K562 (cell line): ENCODE measurements at regions of chr4 and their contacts with region 1.

Region 1: DNA sequence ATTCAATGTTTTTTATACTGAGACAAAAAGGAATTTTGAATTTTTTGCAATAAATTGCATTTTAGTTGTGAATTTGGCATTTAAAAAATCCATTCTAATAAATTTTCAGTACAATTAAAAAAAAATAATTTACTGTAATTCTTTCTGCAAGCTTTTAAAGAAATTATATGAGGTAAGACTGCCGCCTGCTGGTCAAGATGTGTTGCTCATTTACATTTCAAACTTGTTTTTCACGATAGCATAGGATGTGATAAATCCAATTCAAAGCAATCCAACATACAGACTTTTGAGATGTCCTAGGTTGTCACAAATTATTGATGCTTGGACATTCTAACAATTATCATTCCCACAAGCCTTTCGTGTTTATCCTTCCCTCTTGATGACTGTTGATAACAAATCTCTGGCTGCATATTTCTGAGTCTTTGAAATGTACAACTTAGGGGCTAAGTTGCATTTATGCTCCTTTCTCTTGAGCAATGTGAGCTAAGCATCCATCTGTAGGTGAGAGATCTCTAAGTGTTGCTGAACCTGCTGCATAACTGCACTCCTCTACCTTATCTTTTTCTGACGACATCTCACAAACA is 21.7 kb upstream of the MFAP3L start:
- DNase-seq: peak; percentile 23 to 73 (median 26)
- ATAC-seq: peak; percentile 47; the same call in 1 of the 3 replicates
- H3K4me3 ChIP-seq: no peak overlapping the region
- H3K27ac ChIP-seq: no peak overlapping the region
- H3K4me1 ChIP-seq: no peaks in the 10 kb centered on the region
- H3K27me3 ChIP-seq: no peaks in the 10 kb centered on the region
- CTCF ChIP-seq: peak; percentile 49 to 87 (median 67); a peak in 5 of 6 replicates
- EP300 ChIP-seq: no peak
- POLR2A ChIP-seq: no peak
- RAD21 ChIP-seq: peak; percentile 82 to 90

Region 2: GRCh38 chr4:169810325-169811323 is 237.2 kb before region 1 on chr4:
- CTCF ChIA-PET with region 1: interaction called, 12 read pairs
- POLR2A ChIA-PET with region 1: no interaction called
- in situ Hi-C with region 1: loop called (anchors 5 kb)
- intact Hi-C with region 1: loop called (anchors 1 kb)
- DNase-seq: peak; percentile 63 to 73 (median 68)
- ATAC-seq: peak; percentile 90
- H3K4me3 ChIP-seq: no peak overlapping the region
- H3K27ac ChIP-seq: no peak overlapping the region
- H3K4me1 ChIP-seq: no peaks in the 10 kb centered on the region
- H3K27me3 ChIP-seq: peaks cover 0 to 4% of the 10 kb centered on the region in 2 experiments; a peak in 1 of 5 replicates
- CTCF ChIP-seq: peak; percentile 64 to 86 (median 74); a peak in 5 of 6 replicates
- EP300 ChIP-seq: no peak
- POLR2A ChIP-seq: no peak
- RAD21 ChIP-seq: peak; percentile 80

Region 3: DNA sequence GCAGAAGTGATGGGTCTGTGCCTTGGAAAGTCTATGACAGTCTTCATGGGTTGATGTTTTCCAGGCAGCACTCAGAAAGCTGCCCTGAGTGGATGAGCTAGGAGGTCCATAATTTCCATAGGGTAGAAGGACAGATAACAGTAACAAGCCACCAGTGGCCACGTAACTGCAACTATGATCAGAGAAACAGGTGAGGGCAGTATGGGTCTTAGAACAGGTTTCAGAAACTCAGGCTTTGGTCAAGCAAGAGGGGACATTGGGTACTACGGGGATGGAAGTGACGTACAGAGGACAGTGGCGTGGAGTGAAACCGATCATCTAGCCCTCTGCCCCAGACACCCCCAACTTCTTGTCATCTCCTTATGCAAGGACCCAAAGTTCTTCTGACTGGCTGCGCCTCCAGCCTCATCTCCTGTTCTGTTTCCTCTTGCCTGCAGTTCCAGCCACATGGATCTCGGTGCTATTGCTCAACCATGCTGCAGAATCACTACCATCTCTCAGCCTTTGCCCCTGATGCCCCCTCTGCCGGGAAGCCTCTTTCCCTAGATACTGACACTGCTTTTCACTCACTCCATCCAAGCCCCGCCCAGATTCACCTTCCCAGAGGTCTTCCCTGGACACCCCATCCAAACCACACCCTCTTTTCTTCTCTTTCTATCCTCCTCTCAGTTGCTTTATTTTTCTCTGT is 145.1 kb before region 1 on chr4:
- CTCF ChIA-PET with region 1: interaction called, 3 read pairs
- POLR2A ChIA-PET with region 1: no interaction called
- in situ Hi-C with region 1: no loop called
- intact Hi-C with region 1: loop called (anchors 10 kb)
- DNase-seq: peak in 1 of 4 experiments; percentile 6
- ATAC-seq: peak; percentile 51; the same call in 2 of the 3 replicates
- H3K4me3 ChIP-seq: no peak overlapping the region
- H3K27ac ChIP-seq: no peak overlapping the region
- H3K4me1 ChIP-seq: no peaks in the 10 kb centered on the region
- H3K27me3 ChIP-seq: no peaks in the 10 kb centered on the region
- CTCF ChIP-seq: peak in 1 of 3 experiments; percentile 29; a peak in 2 of 6 replicates
- EP300 ChIP-seq: no peak
- POLR2A ChIP-seq: no peak
- RAD21 ChIP-seq: peak; percentile 25 to 38

Region 4: GRCh38 chr4:170325599-170325998 is 277.7 kb after region 1 on chr4:
- CTCF ChIA-PET with region 1: no interaction called
- POLR2A ChIA-PET with region 1: no interaction called
- in situ Hi-C with region 1: no loop called
- intact Hi-C with region 1: no loop called
- DNase-seq: no peak
- ATAC-seq: no peak
- H3K4me3 ChIP-seq: no peak overlapping the region
- H3K27ac ChIP-seq: no peak overlapping the region
- H3K4me1 ChIP-seq: no peaks in the 10 kb centered on the region
- H3K27me3 ChIP-seq: no peaks in the 10 kb centered on the region
- CTCF ChIP-seq: no peak
- EP300 ChIP-seq: no peak
- POLR2A ChIP-seq: no peak
- RAD21 ChIP-seq: no peak